Activated CD4-positive, alpha-beta memory T cell treated with anti-CD3 and anti-CD28 coated beads, Interleukin-2, amount 10 ng/mL, durations not matched to agents 7 days and 5 days (primary cell): ENCODE measurements at regions of chr1 and their contacts with region 1.

Region 1: DNA sequence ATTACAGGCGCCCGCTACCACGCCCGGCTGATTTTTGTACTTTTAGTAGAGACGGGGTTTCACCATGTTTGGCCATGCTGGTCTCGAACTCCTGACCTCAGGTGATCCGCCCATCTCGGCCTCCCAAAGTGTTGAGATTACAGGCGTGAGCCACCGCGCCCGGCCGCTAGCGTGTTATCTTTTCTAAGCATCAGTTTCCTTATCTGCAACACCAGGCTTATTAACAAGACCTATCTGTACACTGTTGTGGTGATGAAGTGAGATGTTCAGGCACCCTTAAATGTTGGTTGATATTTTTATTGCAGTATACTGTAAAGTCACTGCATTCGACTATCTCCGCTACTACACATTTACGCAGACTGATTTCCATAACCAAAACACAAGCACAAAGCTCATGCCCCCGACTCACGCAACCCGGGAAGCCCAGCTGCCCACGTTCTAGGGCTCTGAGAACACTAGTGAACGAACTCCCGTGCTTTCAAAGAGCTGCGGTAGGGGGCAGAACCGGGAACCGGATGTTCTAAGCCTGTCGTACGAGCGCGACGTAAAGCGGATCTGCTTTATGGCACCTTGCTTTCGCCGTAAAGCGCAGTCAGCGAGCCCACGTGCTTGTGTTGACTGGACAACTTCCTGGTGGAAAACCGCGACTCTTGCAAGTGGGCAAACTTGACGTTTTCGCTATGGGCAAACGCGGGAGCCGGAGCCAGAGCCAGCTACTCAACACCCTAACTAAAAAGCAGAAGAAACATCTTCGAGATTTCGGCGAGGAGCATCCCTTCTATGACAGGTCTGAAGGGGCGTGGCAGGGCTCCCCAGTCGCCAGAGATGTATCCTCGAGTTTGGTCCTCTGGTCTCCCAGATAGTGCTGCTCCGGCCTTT is at the start of gene UTP25:
- DNase-seq: peak; percentile 94
- H3K4me3 Mint-ChIP-seq: peak within 1 kb of the TSS; percentile 95
- H3K27ac Mint-ChIP-seq: peak within 1 kb of the TSS; percentile 86
- H3K4me1 Mint-ChIP-seq: peaks cover 35% of the 10 kb centered on the region
- H3K27me3 Mint-ChIP-seq: peaks cover 7% of the 10 kb centered on the region
- total RNA-seq, gene UTP25: 5.7 to 5.8 TPM

Region 2: DNA sequence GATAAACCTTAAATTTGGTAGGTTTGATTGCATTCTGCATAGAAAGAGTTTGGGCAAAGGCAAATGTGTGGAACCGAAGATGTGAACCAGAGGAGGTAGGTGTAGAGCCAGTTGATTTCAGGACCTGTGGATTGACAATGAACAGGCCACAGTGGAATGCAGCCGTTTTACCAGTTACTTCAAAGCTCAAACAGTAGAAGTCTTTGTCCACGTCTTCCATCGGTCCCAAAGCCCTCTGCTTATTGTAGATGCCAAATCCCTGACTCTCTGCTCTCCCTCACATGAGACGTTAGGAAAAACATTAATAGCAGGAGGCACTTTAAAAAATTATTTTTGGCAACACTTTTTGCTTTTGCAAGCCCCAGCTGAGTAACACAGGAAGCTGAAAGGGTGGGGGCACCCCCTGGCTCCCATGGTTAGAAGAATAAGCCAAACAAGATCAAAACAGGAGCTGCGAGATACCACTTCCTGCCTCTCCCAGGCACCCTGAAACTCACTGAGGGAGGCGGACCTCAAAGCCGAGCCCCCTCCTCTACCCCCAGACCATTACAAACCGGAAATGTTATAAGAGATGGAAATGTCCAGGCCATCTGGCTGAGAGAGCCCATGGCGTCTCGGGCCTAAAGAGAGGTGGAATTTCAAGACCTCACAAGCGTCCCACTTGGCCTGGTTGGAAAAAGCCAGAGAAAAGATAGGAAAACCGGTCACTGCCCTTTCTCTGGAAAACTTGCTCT is 58.3 kb before region 1 on chr1:
- CTCF ChIA-PET with region 1: interaction called, 13 read pairs
- POLR2A ChIA-PET with region 1: interaction called, 14 read pairs
- DNase-seq: peak; percentile 87
- H3K4me3 Mint-ChIP-seq: no peak overlapping the region
- H3K27ac Mint-ChIP-seq: no peak overlapping the region
- H3K4me1 Mint-ChIP-seq: peaks cover 37% of the 10 kb centered on the region
- H3K27me3 Mint-ChIP-seq: no peaks in the 10 kb centered on the region

Region 3: GRCh38 chr1:209784265-209785169 is 43.1 kb before region 1 on chr1 and contains the start of gene C1orf74:
- CTCF ChIA-PET with region 1: interaction called, 19 read pairs
- POLR2A ChIA-PET with region 1: interaction called, 6 read pairs
- DNase-seq: peak; percentile 99
- H3K4me3 Mint-ChIP-seq: peak within 1 kb of the TSS; percentile 90
- H3K27ac Mint-ChIP-seq: peak within 1 kb of the TSS; percentile 91
- H3K4me1 Mint-ChIP-seq: peaks cover 61% of the 10 kb centered on the region
- H3K27me3 Mint-ChIP-seq: no peaks in the 10 kb centered on the region
- total RNA-seq, gene C1orf74: 2.1 to 2.2 TPM

Region 4: DNA sequence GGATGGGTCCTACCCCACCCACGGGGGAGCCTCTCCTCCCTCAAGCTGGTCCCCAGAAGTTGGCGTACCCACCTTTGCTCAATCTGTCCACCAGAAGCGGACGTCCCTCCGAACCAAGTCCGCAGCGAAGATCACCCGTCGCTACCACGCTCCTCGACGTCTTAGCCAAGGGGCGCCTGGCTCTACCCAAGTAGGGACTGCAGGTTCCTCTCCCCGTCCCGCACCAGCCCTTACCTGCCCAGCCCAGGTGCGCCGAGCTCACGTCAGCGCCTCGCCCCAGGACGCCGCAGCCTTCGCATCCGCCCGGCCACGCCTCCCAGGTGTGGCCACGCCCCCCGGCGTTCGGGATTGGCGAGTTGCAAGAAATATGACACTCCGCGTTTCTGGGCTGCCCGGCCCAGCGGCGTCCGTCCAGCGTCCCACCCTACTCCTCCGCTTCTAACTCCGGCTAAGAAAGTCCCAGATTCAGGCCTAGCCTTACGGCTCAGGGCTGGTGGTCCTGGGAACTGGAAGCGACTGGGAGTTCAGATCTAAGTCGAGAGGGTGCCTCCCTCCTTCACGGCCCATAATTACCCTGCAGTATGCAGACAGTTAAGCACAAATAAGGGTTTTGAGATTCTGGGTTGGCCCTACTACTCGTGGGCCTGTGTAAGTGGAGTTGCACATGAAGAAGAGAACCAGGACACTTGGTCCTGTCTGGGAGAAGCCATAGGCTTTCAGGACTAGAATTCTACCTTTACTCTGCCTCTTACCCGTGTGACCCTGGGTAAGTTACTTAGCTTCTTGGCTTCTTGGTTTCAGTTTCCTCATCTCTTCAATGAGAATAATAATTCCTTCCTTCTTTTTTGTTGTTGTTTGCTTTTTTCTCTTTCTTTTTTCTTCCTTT is 21.5 kb before region 1 on chr1 and contains the start of gene IRF6:
- CTCF ChIA-PET with region 1: interaction called, 33 read pairs
- POLR2A ChIA-PET with region 1: interaction called, 3 read pairs
- DNase-seq: peak; percentile 70
- H3K4me3 Mint-ChIP-seq: peak within 1 kb of the TSS; percentile 75
- H3K27ac Mint-ChIP-seq: peak within 1 kb of the TSS; percentile 45
- H3K4me1 Mint-ChIP-seq: peaks cover 13% of the 10 kb centered on the region
- H3K27me3 Mint-ChIP-seq: peaks cover 25% of the 10 kb centered on the region
- total RNA-seq, gene IRF6: 0.10 to 0.25 TPM

Region 5: GRCh38 chr1:209815931-209816341 is 11.7 kb before region 1 on chr1:
- CTCF ChIA-PET with region 1: interaction called, 31 read pairs
- POLR2A ChIA-PET with region 1: interaction called, 3 read pairs
- DNase-seq: no peak
- H3K4me3 Mint-ChIP-seq: no peak overlapping the region
- H3K27ac Mint-ChIP-seq: no peak overlapping the region
- H3K4me1 Mint-ChIP-seq: no peaks in the 10 kb centered on the region
- H3K27me3 Mint-ChIP-seq: peaks cover 15% of the 10 kb centered on the region

Region 6: DNA sequence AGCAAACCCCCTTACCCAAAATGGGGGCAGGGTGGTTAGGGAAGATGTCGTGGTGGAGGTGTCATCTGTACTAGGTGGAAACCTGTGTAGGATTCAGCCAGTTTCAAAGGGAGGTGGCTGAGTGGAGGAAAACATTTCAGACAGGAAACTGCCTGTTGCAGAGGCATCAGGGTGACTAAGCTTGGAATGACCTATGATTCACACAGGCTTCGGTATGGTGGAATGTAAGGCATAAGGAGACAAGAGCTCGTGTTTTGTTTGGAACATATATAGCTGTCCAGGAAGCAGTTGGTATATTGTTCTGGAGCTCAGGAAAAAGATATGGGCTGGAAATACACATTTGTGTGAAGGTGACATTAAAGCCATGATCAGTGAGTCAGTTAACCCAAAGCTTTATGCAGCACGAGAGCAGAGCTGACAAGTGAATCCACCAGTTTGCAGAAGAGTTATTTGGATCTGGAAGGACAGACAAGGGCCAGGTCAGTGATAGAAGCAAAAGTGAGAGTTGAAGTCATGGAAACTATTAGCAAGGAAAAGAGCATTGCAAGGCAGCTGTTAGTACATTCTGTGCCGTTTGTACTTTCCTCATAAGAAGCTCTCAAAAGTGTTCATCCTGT is 12.4 kb after region 1 on chr1:
- CTCF ChIA-PET with region 1: interaction called, 16 read pairs
- POLR2A ChIA-PET with region 1: interaction called, 4 read pairs
- DNase-seq: no peak
- H3K4me3 Mint-ChIP-seq: no peak overlapping the region
- H3K27ac Mint-ChIP-seq: no peak overlapping the region
- H3K4me1 Mint-ChIP-seq: peaks cover 23% of the 10 kb centered on the region
- H3K27me3 Mint-ChIP-seq: no peaks in the 10 kb centered on the region